Heart right ventricle (tissue), 16 donors: ENCODE measurements at regions of chr17 and their contacts with region 1.

Region 1: GRCh38 chr17:73092523-73093135 is at the start of gene SLC39A11:
- DNase-seq: peak; percentile 93 to 94
- ATAC-seq: peak; percentile 98 to 99 (median 99)
- H3K4me3 ChIP-seq: peak within 1 kb of the TSS; percentile 55 to 79 (median 64)
- H3K27ac ChIP-seq: peak within 1 kb of the TSS; percentile 17 to 81 (median 62)
- H3K4me1 ChIP-seq: peaks cover 2 to 32% (median 15%) of the 10 kb centered on the region in 9 donors
- H3K27me3 ChIP-seq: peaks cover 0 to 9% (median 0%) of the 10 kb centered on the region in 7 donors
- CTCF ChIP-seq: no peak
- total RNA-seq, gene SLC39A11: 3.9 to 11.3 (median 7.1) TPM

Region 2: GRCh38 chr17:72985881-72986720 is 106.5 kb before region 1 on chr17:
- intact Hi-C with region 1: loop called in 1 of 10 experiments (anchors 5 kb)
- DNase-seq: peak; percentile 30 to 70
- ATAC-seq: peak in 7 of 8 donors; percentile 60 to 90 (median 77)
- H3K4me3 ChIP-seq: no peak overlapping the region
- H3K27ac ChIP-seq: no peak overlapping the region
- H3K4me1 ChIP-seq: peaks cover 0 to 9% (median 0%) of the 10 kb centered on the region in 9 donors
- H3K27me3 ChIP-seq: no peaks in the 10 kb centered on the region
- CTCF ChIP-seq: peak; percentile 59 to 89 (median 84)

Region 3: DNA sequence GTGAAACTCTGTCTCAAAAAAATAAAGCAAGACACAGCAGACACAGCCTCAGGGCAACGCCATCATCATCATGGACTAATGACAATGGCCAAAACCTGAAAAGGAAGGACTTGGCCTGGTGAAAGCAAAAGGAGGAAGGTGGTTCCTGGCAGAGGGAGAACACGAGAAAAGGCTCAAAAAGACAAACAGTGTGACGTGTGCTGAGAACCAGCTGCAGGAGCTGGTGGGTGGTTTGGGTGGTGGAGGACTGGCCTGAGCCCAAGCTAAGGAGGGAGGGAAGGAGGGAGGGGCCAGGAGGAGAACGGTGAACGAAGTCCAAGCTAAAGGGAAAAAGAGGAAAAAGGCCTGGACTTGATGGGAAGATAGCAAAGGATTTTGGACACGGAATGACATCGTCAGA is 85.2 kb before region 1 on chr17:
- intact Hi-C with region 1: loop called in 1 of 10 experiments (anchors 5 kb)
- DNase-seq: peak in 1 of 2 donors; percentile 30
- ATAC-seq: peak in 5 of 8 donors; percentile 39 to 75 (median 52)
- H3K4me3 ChIP-seq: no peak overlapping the region
- H3K27ac ChIP-seq: no peak overlapping the region
- H3K4me1 ChIP-seq: peaks cover 0 to 17% (median 0%) of the 10 kb centered on the region in 9 donors
- H3K27me3 ChIP-seq: no peaks in the 10 kb centered on the region
- CTCF ChIP-seq: no peak

Region 4: GRCh38 chr17:73043686-73044581 is 48.7 kb before region 1 on chr17:
- intact Hi-C with region 1: loop called in 1 of 10 experiments (anchors 5 kb)
- DNase-seq: no peak
- ATAC-seq: peak in 2 of 8 donors; percentile 27 to 36
- H3K4me3 ChIP-seq: no peak overlapping the region
- H3K27ac ChIP-seq: peak overlapping the region in 4 of 10 donors; percentile 3 to 46 (median 42)
- H3K4me1 ChIP-seq: peaks cover 0 to 21% (median 14%) of the 10 kb centered on the region in 9 donors
- H3K27me3 ChIP-seq: no peaks in the 10 kb centered on the region
- CTCF ChIP-seq: no peak

Region 5: GRCh38 chr17:73156166-73156840 is 63.7 kb after region 1 on chr17:
- intact Hi-C with region 1: loop called in 1 of 10 experiments (anchors 5 kb)
- DNase-seq: peak; percentile 62 to 73
- ATAC-seq: peak; percentile 81 to 95 (median 92)
- H3K4me3 ChIP-seq: no peak overlapping the region
- H3K27ac ChIP-seq: peak overlapping the region in 1 of 10 donors; percentile 10
- H3K4me1 ChIP-seq: peaks cover 0 to 20% (median 8%) of the 10 kb centered on the region in 9 donors
- H3K27me3 ChIP-seq: peaks cover 0 to 40% (median 24%) of the 10 kb centered on the region in 7 donors
- CTCF ChIP-seq: peak; percentile 50 to 89 (median 80)

Region 6: DNA sequence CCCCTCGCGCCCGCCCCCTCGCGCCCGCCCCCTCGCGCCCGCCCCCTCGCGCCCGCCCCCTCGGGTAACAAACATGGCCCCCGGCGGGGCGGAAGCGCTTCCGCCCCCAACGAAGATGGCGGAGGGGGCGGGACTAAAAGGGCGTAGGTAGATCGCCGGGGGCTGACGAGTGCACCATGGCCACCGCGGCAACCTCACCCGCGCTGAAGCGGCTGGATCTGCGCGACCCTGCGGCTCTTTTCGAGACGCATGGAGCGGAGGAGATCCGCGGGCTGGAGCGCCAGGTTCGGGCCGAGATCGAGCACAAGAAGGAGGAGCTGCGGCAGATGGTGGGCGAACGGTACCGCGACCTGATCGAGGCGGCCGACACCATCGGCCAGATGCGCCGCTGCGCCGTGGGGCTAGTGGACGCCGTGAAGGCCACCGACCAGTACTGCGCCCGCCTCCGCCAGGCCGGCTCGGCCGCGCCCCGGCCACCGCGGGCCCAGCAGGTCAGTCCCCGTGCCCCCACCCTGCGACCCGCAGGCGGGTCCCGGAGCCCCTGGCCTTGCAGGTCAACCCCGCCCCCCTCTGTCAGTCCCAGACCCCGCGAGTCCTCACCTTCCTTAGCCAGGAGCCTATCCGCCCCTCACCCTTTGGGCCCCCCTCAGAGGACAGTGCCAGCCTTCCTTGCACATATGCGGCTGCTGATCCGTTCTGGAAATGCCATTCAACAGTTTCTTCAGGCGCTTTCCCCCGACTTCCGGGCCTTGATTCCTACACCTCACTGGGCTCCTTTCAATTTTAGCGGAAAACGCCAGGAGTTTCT is 100.5 kb after region 1 on chr17 and contains the start of gene COG1:
- intact Hi-C with region 1: loop called in 1 of 10 experiments (anchors 2 kb)
- DNase-seq: peak; percentile 91 to 92
- ATAC-seq: peak; percentile 88 to 93 (median 90)
- H3K4me3 ChIP-seq: peak within 1 kb of the TSS; percentile 67 to 98 (median 92)
- H3K27ac ChIP-seq: peak within 1 kb of the TSS; percentile 58 to 96 (median 90)
- H3K4me1 ChIP-seq: peaks cover 3 to 25% (median 15%) of the 10 kb centered on the region in 9 donors
- H3K27me3 ChIP-seq: no peaks in the 10 kb centered on the region
- CTCF ChIP-seq: no peak
- total RNA-seq, gene COG1: 44.4 to 70.6 (median 58.0) TPM